Activated T-helper 2 cell treated with anti-CD3 and anti-CD28 coated beads, Interferon-gamma antibody, Interleukin-2, Interleukin-4, amounts not matched to agents 10 μg/mL and 5 μg/mL and 100 μg/mL, durations not matched to agents 14 hours and 24 hours and 36 hours (primary cell): ENCODE measurements at regions of chr1 and their contacts with region 1.

Region 1: GRCh38 chr1:6199298-6200187 is at the start of gene RPL22:
- DNase-seq: peak; percentile 97
- H3K4me3 Mint-ChIP-seq: peak within 1 kb of the TSS; percentile 98
- H3K27ac Mint-ChIP-seq: peak within 1 kb of the TSS; percentile 94
- H3K4me1 Mint-ChIP-seq: peaks cover 29% of the 10 kb centered on the region
- H3K27me3 Mint-ChIP-seq: no peaks in the 10 kb centered on the region
- total RNA-seq, gene RPL22: 473 and 533 TPM in 2 replicates

Region 2: GRCh38 chr1:5992026-5992813 is 207.3 kb before region 1 on chr1 and contains the start of gene NPHP4:
- intact Hi-C with region 1: loop called (anchors 5 kb)
- DNase-seq: peak; percentile 100
- H3K4me3 Mint-ChIP-seq: peak within 1 kb of the TSS; percentile 96
- H3K27ac Mint-ChIP-seq: peak within 1 kb of the TSS; percentile 96
- H3K4me1 Mint-ChIP-seq: peaks cover 22% of the 10 kb centered on the region
- H3K27me3 Mint-ChIP-seq: no peaks in the 10 kb centered on the region
- total RNA-seq, gene NPHP4: 19.0 and 20.2 TPM in 2 replicates

Region 3: DNA sequence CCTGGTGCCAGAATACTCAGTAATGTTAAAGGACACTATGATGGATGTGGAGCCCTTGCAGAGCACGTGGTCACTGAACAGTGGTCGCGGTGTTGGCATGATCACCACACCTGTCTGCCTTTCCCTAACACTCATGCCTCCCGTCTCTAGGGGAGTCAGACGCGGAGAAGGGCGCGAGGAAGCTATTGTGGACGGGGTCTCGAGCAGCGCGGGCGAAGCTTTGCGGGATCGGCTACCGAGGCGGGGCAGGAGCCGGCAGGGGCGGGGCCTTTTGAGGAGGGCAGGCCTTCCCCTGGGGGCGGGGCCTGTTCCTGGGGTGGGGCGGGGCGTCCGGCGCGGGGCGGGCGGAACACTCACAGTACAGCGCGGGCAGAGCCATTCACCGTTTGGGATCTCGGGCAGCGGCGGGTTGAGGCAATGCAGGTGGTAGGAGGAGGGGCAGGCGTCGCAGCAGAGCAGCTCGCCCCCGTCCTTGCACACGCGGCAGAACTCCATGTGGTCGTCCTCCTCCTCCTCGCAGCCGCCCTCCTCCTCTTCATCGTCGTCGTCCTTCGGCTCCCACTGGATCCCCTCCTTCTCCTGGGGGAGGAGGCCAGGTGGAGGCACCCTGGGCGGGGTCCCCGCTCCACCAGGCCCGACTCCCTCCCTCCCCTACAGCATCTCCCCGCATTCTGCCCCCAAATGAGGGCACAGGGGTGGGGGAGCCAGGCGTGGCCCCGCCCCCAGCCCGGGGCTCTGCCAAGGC is 50.9 kb before region 1 on chr1:
- intact Hi-C with region 1: loop called (anchors 5 kb)
- DNase-seq: peak; percentile 60
- H3K4me3 Mint-ChIP-seq: peak overlapping the region; percentile 48
- H3K27ac Mint-ChIP-seq: no peak overlapping the region
- H3K4me1 Mint-ChIP-seq: peaks cover 3% of the 10 kb centered on the region
- H3K27me3 Mint-ChIP-seq: peaks cover 2% of the 10 kb centered on the region

Region 4: DNA sequence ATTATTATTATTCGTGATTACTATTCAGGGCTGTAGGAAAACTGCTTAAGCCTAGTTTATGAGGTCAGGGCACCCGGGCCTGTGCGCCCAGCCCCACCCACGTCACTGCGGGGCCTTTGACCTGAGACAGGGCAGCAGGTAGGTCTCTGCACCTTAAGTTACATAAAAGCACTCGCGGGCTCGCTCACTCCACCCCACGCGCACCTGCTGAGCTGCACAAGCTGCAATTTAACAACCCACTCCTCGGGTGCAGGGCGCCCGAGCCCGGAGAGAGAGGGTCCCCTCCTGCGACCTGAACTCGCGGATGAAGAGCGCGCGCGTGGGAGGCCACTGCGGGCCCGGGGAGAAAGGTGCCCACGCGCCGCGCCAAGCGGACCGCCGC is 35.7 kb after region 1 on chr1:
- intact Hi-C with region 1: loop called (anchors 5 kb)
- DNase-seq: no peak
- H3K4me3 Mint-ChIP-seq: peak overlapping the region; percentile 89
- H3K27ac Mint-ChIP-seq: peak overlapping the region; percentile 60
- H3K4me1 Mint-ChIP-seq: peaks cover 9% of the 10 kb centered on the region
- H3K27me3 Mint-ChIP-seq: peaks cover 15% of the 10 kb centered on the region

Region 5: DNA sequence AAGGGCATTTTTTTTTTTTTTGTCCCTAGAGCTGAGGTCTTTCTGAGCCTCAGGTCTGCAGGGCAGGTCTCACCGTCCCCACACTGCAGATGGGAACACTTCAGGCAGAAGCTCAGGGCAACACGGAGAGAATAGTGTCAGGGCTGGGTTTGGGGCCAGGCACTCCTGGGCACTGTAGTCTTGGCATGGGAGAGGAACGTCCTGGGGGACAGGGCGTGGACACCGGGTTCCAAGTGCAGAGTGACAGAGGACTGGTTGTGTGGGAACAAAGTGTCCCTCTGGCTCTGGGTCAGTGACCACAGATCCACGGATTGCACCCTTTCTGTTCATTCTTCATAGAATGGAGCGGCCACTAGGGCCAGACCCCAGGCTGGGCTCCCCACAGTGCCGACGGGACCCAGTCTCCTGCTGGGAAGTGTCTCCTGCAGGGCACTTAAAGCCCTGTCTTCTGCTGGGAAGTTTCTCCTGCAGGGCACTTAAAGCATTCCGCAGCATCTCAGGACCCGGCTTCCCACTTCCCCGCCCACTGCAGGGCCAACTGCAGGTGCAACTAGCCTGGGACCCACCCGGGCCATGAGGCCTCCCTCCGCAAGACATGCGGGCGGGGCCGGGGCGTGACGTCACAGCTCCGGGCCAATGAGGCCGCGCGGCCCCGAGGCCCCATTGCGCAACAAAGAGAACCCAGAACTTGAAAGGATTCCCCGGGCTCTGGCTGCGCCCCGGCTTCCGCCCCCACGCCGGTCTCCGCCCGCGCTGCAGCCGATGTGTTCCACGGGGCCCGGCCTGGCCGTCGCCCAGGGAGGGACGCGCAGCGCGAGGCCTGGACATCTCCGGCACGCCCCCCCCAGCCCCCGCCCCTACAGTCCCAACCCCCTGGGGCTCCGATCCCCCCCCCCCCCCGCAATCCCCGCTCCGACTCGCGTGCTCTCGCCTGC is 60.2 kb after region 1 on chr1:
- intact Hi-C with region 1: no loop called
- DNase-seq: peak; percentile 74
- H3K4me3 Mint-ChIP-seq: peak overlapping the region; percentile 62
- H3K27ac Mint-ChIP-seq: no peak overlapping the region
- H3K4me1 Mint-ChIP-seq: peaks cover 2% of the 10 kb centered on the region
- H3K27me3 Mint-ChIP-seq: peaks cover 19% of the 10 kb centered on the region